ENCODE measurements at regions of chr10 and their contacts with region 1.

Region 1: DNA sequence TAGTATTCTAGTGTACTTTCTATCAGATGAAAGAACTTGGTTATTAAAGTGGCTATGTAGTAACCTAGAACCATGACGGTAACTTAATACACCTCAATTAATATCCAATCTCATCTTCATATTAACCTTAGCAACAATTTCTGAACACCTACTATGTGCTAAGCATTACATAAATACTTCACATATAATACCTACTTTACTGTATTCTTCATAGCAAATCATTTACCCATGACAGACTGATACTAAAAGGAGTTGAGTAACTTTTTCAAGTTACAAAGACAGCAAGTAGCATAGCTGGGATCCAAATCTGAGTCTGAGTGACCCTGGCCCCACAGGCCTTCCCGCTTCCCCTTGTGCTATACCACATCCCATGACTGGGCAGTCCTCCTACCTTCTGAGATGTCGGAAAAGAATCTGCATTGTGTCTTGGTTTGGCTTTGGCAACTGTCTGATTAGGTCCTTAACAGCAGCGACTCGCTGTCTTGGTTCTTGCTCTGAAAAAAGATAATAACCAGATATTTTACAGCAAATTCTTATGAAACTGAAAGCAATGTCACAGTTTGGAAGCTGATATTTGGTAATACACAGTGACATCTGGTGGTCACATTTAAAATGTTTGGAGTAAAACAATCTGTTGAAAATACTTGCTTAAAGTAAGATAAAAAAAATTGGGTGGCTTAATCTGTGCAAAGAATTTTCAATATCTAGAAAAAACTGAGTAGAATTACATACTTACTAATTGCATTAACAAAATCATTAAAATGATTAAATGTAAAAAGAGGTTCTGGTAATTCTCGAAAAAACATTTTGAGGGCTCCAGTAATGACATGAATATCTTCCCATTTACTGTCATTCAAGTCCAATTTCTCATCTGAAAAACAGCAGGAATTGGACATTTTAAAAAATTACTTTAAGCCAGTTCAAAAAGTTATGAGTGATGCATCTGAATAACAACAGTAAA is 120.1 kb downstream of the ARHGAP12 start:
- DNase-seq: peak; percentile 28 to 51 (median 35)
- ATAC-seq: peak; percentile 51 to 86 (median 80)
- H3K4me3 ChIP-seq: peak overlapping the region in 11 of 12 donors; percentile 18 to 60 (median 47)
- H3K27ac ChIP-seq: peak overlapping the region; percentile 13 to 86 (median 80)
- H3K4me1 ChIP-seq: peaks cover 0 to 12% (median 0%) of the 10 kb centered on the region in 12 donors
- H3K27me3 ChIP-seq: no peaks in the 10 kb centered on the region
- CTCF ChIP-seq: peak; percentile 37 to 79 (median 62)
- POLR2A ChIP-seq: no peak

Region 2: GRCh38 chr10:30722956-30723620 is 1085.5 kb before region 1 on chr10:
- intact Hi-C with region 1: loop called in 5 of 10 experiments (anchors 5 to 10 kb)
- DNase-seq: no peak
- ATAC-seq: no peak
- H3K4me3 ChIP-seq: no peak overlapping the region
- H3K27ac ChIP-seq: no peak overlapping the region
- H3K4me1 ChIP-seq: peaks cover 0 to 4% (median 0%) of the 10 kb centered on the region in 12 donors
- H3K27me3 ChIP-seq: no peaks in the 10 kb centered on the region
- CTCF ChIP-seq: no peak
- POLR2A ChIP-seq: no peak

Region 3: DNA sequence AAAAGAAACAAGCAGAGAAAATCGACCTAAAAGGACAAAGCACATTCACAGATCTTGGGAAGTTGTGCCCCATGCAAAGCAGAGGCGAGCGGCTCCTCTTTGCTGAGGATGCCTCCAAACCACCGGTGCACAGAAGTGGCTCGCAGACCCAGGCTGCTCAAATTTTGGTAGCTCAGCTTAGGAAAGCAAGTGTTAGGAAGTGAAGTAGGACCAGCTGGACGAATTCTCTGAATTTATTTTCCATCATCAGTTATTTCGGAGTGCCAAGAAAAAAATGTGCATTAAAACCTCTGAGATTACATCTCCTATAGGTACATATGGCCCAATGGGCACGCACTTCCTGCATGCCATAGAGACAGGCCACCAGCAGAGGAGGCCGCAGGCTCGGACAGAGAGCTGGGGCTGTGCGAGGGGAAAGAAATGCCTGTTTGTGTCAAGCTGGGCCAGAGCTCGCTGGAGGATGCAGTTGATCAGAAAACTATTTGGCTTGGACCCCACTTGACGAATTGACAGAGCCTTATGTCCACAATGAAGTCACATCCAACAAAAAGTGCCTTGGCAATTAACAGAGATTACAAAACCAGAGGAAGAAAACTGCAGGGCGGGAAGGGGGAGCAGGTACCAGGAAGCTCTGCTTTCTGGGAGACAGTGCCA is 1056.7 kb before region 1 on chr10:
- intact Hi-C with region 1: loop called in 6 of 10 experiments (anchors 2 to 10 kb)
- DNase-seq: peak in 4 of 5 donors; percentile 69 to 84 (median 80)
- ATAC-seq: peak; percentile 64 to 87 (median 77)
- H3K4me3 ChIP-seq: no peak overlapping the region
- H3K27ac ChIP-seq: peak overlapping the region in 9 of 12 donors; percentile 3 to 68 (median 34)
- H3K4me1 ChIP-seq: peaks cover 0 to 23% (median 6%) of the 10 kb centered on the region in 12 donors
- H3K27me3 ChIP-seq: no peaks in the 10 kb centered on the region
- CTCF ChIP-seq: peak in 11 of 12 donors; percentile 12 to 97 (median 91)
- POLR2A ChIP-seq: no peak

Region 4: GRCh38 chr10:31603235-31604087 is 205.1 kb before region 1 on chr10:
- intact Hi-C with region 1: loop called in 1 of 10 experiments (anchors 10 kb)
- DNase-seq: peak; percentile 97 to 98 (median 97)
- ATAC-seq: peak; percentile 93 to 97 (median 96)
- H3K4me3 ChIP-seq: peak overlapping the region; percentile 42 to 80 (median 66)
- H3K27ac ChIP-seq: peak overlapping the region; percentile 79 to 95 (median 90)
- H3K4me1 ChIP-seq: peaks cover 0 to 36% (median 15%) of the 10 kb centered on the region in 12 donors
- H3K27me3 ChIP-seq: no peaks in the 10 kb centered on the region
- CTCF ChIP-seq: peak in 6 of 12 donors; percentile 7 to 18 (median 11)
- POLR2A ChIP-seq: peak in 1 of 2 donors; percentile 64

Region 5: DNA sequence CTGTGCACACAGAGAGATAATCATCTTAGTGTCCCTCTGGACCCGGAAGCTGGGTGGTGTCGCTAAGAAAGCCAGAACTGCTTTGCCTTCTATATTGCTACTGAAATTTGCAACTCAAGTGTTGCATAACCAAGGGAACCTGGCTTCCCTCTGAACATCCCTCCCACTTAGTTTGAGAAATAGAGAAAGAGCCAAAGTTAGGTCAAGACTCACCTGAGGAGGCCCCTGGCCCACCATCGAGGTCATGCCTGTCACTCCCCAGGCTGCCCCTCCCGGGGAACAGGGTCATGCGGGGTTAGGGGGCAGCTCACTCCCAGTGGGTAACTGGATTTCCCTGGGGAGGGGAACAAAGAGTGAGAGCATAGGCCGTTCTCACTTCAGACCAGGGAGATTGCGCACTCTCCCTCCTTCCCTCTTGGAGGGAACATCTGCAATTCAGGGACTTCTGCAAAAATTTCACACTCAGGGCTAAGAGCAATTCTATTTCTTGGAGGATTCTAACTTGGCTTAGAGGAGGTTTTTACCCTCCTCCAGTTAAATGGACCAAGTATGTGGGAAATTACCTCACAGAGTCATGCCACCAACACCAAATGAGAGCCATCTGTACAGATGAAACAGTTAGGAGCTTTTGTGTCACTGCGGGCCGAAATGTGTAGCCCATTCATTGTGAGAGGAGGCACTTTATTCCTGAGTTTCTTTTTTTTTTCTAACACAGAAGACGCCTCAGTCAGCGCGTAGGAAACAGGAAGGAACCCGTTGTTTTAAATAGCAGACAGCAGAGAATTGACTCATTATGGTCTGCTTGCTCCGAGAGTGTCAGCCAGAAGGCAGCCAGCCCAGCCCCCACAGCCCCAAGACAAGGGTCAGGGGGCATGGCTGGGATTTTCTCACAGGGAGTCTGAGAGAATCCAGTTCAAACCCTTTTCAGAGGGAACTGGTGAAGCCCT is 101.2 kb before region 1 on chr10:
- intact Hi-C with region 1: loop called in 5 of 10 experiments (anchors 1 to 5 kb)
- DNase-seq: peak; percentile 84 to 86 (median 84)
- ATAC-seq: peak; percentile 72 to 92 (median 90)
- H3K4me3 ChIP-seq: peak overlapping the region in 9 of 12 donors; percentile 7 to 41 (median 31)
- H3K27ac ChIP-seq: peak overlapping the region; percentile 74 to 97 (median 87)
- H3K4me1 ChIP-seq: peaks cover 0 to 64% (median 41%) of the 10 kb centered on the region in 12 donors
- H3K27me3 ChIP-seq: no peaks in the 10 kb centered on the region
- CTCF ChIP-seq: no peak
- POLR2A ChIP-seq: no peak

Region 6: DNA sequence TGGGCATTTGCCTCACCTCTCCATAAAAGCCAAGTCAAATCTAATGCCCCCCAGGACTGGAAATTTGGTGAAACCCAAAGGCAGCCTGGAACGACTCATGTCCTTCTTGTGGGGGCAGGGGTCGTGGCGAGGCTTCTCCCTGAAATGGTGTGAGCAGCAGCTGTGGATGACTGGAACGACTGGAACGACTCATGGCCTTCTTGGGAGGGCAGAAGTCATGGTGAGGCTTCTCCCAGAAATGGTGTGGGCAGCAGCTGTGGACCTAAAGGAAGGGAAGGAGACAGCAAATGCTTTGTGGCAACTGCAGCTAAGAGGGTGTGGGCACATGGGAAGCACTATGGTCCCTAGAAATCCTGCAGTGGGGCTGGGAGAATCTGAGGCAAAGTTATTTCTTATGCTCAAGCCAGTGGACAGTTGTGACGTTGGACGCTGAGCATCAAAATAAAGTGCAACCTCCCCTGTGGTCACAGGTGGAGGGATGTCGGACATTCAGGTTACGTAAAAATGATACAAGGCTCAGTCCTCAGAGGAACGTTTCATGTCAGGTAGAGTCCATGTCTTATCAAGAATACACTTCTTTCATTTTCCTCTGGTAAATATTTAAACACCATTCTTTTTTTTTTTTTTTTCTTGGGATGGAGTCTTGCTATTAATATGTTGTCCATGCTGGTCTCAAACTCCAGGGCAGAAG is 354.7 kb after region 1 on chr10:
- intact Hi-C with region 1: no loop called
- DNase-seq: no peak
- ATAC-seq: no peak
- H3K4me3 ChIP-seq: no peak overlapping the region
- H3K27ac ChIP-seq: no peak overlapping the region
- H3K4me1 ChIP-seq: peaks cover 0 to 12% (median 0%) of the 10 kb centered on the region in 12 donors
- H3K27me3 ChIP-seq: no peaks in the 10 kb centered on the region
- CTCF ChIP-seq: no peak
- POLR2A ChIP-seq: no peak